Left colon (tissue), 2 donors: ENCODE measurements at regions of chr16 and their contacts with region 1.

Region 1: DNA sequence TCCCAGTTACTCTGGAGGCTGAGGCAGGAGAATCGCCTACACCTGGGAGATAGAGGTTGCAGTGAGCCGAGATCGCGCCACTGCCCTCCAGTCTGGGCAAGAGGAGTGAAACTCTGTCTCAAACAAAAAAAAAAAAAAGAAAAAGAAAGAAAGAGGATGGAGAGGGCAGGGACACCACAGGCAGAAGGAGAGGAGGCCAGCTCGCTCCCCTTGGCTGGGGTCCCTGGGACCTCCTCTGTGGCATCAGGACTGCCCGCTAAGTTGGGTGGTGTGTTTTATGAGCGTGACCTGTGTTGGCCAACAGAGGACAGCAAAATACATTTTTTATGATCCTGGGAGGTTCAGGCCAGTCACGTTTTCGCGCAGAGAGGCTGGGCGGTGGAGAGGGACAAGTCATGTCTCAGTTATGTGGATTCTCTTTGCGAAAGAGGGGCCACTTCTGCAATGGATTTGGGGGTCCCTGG is 229.6 kb downstream of the MRTFB start:
- DNase-seq: peak; percentile 56 to 77
- ATAC-seq: peak; percentile 72

Region 2: GRCh38 chr16:14251419-14251818 is 49.3 kb before region 1 on chr16:
- intact Hi-C with region 1: no loop called
- DNase-seq: no peak
- ATAC-seq: no peak

Region 3: DNA sequence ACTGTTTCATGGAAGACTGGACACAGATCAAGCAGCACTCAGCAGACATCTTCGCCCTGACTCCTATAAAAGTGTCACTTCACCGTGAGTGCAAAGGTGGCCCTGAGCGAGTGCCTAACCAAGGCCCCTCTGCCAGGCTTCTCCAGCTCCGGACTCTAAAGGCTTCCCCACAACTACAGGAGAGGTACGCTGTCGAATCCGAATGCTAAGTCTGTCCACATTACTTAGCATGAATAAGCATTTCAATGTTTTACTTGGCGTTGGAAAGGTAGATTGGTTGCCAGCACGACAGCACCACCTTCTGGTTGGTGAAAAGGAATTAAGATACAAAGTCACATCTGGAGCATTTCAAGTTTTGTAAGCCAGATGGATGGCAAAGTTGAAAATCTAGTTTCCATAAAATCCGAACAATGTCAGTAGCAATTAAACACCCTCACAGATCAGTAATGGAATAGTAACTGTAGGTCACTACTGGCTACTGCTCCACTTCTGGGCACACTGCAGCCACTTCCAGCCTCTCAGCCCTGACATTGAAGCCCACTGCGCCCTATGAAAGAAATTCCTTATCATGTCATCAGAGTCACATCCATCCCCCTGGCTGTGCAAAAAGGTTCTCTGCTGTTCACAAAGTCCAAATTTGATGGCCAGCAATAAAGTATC is 228.4 kb after region 1 on chr16:
- intact Hi-C with region 1: loop called in 1 of 2 experiments (anchors 5 kb)
- DNase-seq: peak; percentile 59 to 64
- ATAC-seq: peak; percentile 93